A549 (cell line): ENCODE measurements at regions of chr11 and their contacts with region 1.

Region 1: GRCh38 chr11:17384002-17384511 is 4.4 kb downstream of the KCNJ11 start:
- DNase-seq: peak; percentile 59 to 89
- ATAC-seq: peak; percentile 41 to 79; a peak in 4 of 6 replicates
- H3K4me3 ChIP-seq: no peak overlapping the region
- H3K27ac ChIP-seq: no peak overlapping the region
- H3K4me1 ChIP-seq: no peaks in the 10 kb centered on the region
- CTCF ChIP-seq: peak; percentile 93
- EP300 ChIP-seq: no peak
- POLR2A ChIP-seq: no peak
- RAD21 ChIP-seq: peak; percentile 92 to 95

Region 2: GRCh38 chr11:17354601-17354991 is 29.5 kb before region 1 on chr11:
- CTCF ChIA-PET with region 1: interaction called, 13 read pairs
- POLR2A ChIA-PET with region 1: no interaction called
- DNase-seq: peak; percentile 80 to 84
- ATAC-seq: peak in 1 of 2 experiments; percentile 55; a peak in 3 of 6 replicates
- H3K4me3 ChIP-seq: peak overlapping the region; percentile 51; the same call in 2 of the 3 replicates
- H3K27ac ChIP-seq: no peak overlapping the region
- H3K4me1 ChIP-seq: no peaks in the 10 kb centered on the region; the same call in 2 of the 3 replicates
- CTCF ChIP-seq: peak; percentile 81
- EP300 ChIP-seq: no peak
- POLR2A ChIP-seq: no peak
- RAD21 ChIP-seq: peak in 1 of 2 experiments; percentile 44; a peak in 3 of 5 replicates

Region 3: GRCh38 chr11:17371614-17372013 is 12.4 kb before region 1 on chr11:
- CTCF ChIA-PET with region 1: interaction called, 56 read pairs
- POLR2A ChIA-PET with region 1: no interaction called
- DNase-seq: peak in 1 of 2 experiments; percentile 58
- ATAC-seq: no peak
- H3K4me3 ChIP-seq: no peak overlapping the region
- H3K27ac ChIP-seq: no peak overlapping the region
- H3K4me1 ChIP-seq: no peaks in the 10 kb centered on the region
- CTCF ChIP-seq: no peak
- EP300 ChIP-seq: no peak
- POLR2A ChIP-seq: no peak
- RAD21 ChIP-seq: no peak

Region 4: GRCh38 chr11:17421781-17422180 is 37.7 kb after region 1 on chr11:
- CTCF ChIA-PET with region 1: interaction called, 21 read pairs
- POLR2A ChIA-PET with region 1: no interaction called
- DNase-seq: no peak
- ATAC-seq: no peak
- H3K4me3 ChIP-seq: no peak overlapping the region
- H3K27ac ChIP-seq: no peak overlapping the region
- H3K4me1 ChIP-seq: peaks cover 8% of the 10 kb centered on the region; the same call in 2 of the 3 replicates
- CTCF ChIP-seq: no peak
- EP300 ChIP-seq: no peak
- POLR2A ChIP-seq: no peak
- RAD21 ChIP-seq: no peak

Region 5: DNA sequence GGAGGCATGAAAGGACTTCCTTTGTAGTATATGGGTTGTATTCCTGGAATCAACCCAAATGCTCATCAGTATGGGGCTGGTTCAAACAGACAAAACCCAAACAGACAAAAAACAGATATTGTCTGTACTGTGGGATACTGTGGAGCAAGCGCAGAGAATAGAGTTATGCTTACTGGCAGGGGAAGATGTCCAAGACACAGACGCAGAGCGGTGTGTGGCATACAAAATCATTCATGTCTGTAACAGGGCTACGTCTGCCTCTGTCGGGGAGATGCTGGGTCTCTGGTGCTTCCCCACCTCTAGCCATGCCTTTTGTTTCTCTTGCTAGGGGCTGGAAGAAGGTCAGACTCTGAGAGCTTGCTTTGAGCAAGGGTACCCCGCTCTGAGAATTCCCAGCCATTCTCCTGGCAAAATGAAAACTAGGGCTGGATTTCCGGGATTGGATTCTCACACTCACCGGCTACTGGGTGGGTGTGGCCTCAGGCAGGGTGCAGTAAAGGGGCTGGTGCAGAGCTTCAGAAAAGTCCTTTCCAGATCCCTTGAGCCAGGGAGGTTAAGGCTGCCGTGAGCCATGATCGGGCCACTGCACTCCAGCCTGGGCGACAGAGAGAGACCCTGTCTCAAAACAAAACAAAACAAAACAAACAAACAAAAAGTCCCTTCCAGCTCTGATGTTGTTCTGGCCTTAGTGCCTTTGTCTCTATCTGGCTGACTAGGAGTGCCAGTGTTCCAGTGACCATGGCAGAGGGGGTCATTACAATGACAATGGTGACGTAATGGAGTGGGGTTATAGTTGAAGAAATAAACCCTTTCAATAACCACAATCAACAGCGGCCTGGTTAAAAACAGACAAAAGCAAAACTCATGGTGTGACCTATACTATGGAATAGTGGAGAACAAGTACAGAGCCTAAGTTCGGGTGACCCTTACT is 95.5 kb after region 1 on chr11:
- CTCF ChIA-PET with region 1: interaction called, 18 read pairs
- POLR2A ChIA-PET with region 1: no interaction called
- DNase-seq: peak; percentile 24 to 58
- ATAC-seq: peak; percentile 40 to 65; a peak in 4 of 6 replicates
- H3K4me3 ChIP-seq: no peak overlapping the region
- H3K27ac ChIP-seq: no peak overlapping the region
- H3K4me1 ChIP-seq: no peaks in the 10 kb centered on the region
- CTCF ChIP-seq: no peak
- EP300 ChIP-seq: no peak
- POLR2A ChIP-seq: no peak
- RAD21 ChIP-seq: no peak

Region 6: GRCh38 chr11:17504330-17505107 is 120.5 kb after region 1 on chr11:
- CTCF ChIA-PET with region 1: interaction called, 1,119 read pairs
- POLR2A ChIA-PET with region 1: no interaction called
- DNase-seq: peak; percentile 65 to 83
- ATAC-seq: peak; percentile 77 to 91
- H3K4me3 ChIP-seq: no peak overlapping the region
- H3K27ac ChIP-seq: no peak overlapping the region
- H3K4me1 ChIP-seq: peaks cover 7% of the 10 kb centered on the region; the same call in 2 of the 3 replicates
- CTCF ChIP-seq: peak; percentile 88
- EP300 ChIP-seq: no peak
- POLR2A ChIP-seq: no peak
- RAD21 ChIP-seq: peak; percentile 97 to 98